Common myeloid progenitor, CD34-positive (primary cell): ENCODE measurements at regions of chr16 and their contacts with region 1.

Region 1: DNA sequence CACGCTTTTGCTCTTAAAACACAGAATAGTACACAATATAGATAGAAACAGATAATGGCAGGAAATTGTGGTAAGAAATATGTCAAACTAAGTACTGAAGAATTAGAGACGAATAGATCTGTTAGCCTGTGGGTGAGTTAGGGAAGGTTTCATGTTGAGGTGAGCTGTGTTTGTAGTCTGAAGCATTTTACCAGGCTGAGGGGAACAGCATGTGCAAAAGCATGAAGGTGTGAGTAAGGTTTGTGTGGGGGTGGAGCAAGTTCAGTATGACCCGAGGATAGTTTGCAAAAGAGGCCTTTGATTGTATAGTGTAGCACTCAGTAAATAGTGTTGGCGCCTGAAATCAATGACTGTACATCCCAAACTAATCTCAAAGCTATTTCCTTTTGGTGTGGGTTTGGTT is 13.8 kb downstream of the IGSF6 start:
- DNase-seq: no peak
- H3K4me3 ChIP-seq: no peak overlapping the region
- H3K27ac ChIP-seq: no peak overlapping the region
- H3K4me1 ChIP-seq: peaks cover 0 to 17% (median 2%) of the 10 kb centered on the region in 4 experiments
- H3K27me3 ChIP-seq: no peaks in the 10 kb centered on the region

Region 2: GRCh38 chr16:21611546-21612384 is 26.8 kb before region 1 on chr16:
- CTCF ChIA-PET with region 1: interaction called, 10 read pairs
- POLR2A ChIA-PET with region 1: no interaction called
- DNase-seq: peak; percentile 22 to 83 (median 56)
- H3K4me3 ChIP-seq: peak overlapping the region in 3 of 7 experiments; percentile 10 to 41 (median 11)
- H3K27ac ChIP-seq: peak overlapping the region in 1 of 2 experiments; percentile 50
- H3K4me1 ChIP-seq: peaks cover 43 to 74% (median 57%) of the 10 kb centered on the region in 4 experiments
- H3K27me3 ChIP-seq: no peaks in the 10 kb centered on the region

Region 3: GRCh38 chr16:22413819-22414218 is 775.2 kb after region 1 on chr16:
- CTCF ChIA-PET with region 1: no interaction called
- POLR2A ChIA-PET with region 1: no interaction called
- DNase-seq: no peak
- H3K4me3 ChIP-seq: no peak overlapping the region
- H3K27ac ChIP-seq: no peak overlapping the region
- H3K4me1 ChIP-seq: no peaks in the 10 kb centered on the region
- H3K27me3 ChIP-seq: no peaks in the 10 kb centered on the region